Activated CD4-positive, alpha-beta T cell treated with anti-CD3 and anti-CD28 coated beads, Interleukin-2, amount 10 ng/mL, durations not matched to agents 24 days and 14 days (primary cell): ENCODE measurements at regions of chr16 and their contacts with region 1.

Region 1: GRCh38 chr16:84617791-84618580 is at the start of gene COTL1:
- DNase-seq: peak; percentile 98
- H3K4me3 Mint-ChIP-seq: peak within 1 kb of the TSS; percentile 96
- H3K27ac Mint-ChIP-seq: peak within 1 kb of the TSS; percentile 89
- H3K4me1 Mint-ChIP-seq: peaks cover 48% of the 10 kb centered on the region
- H3K27me3 Mint-ChIP-seq: peaks cover 7% of the 10 kb centered on the region
- total RNA-seq, gene COTL1: 470 and 474 TPM in 2 replicates

Region 2: DNA sequence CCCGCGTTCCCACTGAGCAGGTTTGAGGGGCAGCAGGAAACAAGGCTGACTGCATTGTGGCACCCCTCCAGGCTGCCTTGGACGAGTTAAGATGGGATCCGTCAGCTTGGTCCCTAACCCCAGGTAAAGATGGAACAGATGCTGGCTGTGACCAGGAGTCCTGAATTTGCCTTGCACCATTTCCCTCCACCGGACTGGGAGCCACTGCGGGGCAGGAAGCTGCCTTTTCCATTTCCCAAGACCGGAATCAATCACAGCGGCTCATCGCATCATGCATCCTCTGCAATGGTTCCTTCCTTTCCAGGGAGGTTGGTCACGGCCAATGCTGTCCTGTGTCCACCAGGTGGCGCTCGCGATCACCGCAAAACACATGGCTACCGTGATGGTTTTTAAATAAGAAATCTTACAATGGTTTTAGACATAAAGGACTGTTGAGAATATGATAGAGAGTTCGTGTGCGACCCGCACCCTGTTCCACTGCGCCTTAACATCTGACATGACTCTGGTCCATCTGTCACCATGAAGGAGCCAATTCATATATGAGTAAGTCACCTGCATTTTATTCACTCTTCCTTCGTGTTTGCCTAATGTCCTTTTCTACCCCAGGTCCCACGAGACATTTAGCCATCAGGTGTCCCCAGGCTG is 106.7 kb before region 1 on chr16:
- intact Hi-C with region 1: loop called (anchors 1 kb)
- DNase-seq: peak; percentile 95
- H3K4me3 Mint-ChIP-seq: peak overlapping the region; percentile 10
- H3K27ac Mint-ChIP-seq: peak overlapping the region; percentile 77
- H3K4me1 Mint-ChIP-seq: peaks cover 58% of the 10 kb centered on the region
- H3K27me3 Mint-ChIP-seq: no peaks in the 10 kb centered on the region

Region 3: GRCh38 chr16:84593825-84594724 is 23.9 kb before region 1 on chr16:
- intact Hi-C with region 1: loop called (anchors 1 kb)
- DNase-seq: peak; percentile 93
- H3K4me3 Mint-ChIP-seq: peak overlapping the region; percentile 84
- H3K27ac Mint-ChIP-seq: peak overlapping the region; percentile 95
- H3K4me1 Mint-ChIP-seq: peaks cover 62% of the 10 kb centered on the region
- H3K27me3 Mint-ChIP-seq: no peaks in the 10 kb centered on the region

Region 4: DNA sequence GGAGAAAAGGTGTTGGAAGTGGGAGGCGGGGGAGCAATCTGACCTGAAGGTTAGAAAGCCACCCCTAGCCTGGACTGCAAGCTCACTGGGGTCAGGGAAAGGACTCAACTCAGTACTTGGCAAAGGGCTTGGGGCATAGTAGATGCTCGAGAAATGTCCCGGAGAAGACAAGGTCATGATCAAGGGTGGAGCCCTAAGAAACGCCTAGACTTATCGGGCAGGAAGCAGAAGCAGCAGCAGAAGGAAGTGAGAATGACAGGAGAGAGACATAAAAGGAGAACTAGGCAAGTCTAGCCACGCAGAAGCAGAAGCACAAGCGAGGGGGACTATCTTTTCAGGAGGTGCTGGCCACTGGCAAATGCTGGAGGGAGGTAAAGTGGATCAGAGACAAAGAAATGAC is 10.3 kb before region 1 on chr16:
- intact Hi-C with region 1: loop called (anchors 1 kb)
- DNase-seq: peak; percentile 82
- H3K4me3 Mint-ChIP-seq: peak overlapping the region; percentile 80
- H3K27ac Mint-ChIP-seq: peak overlapping the region; percentile 87
- H3K4me1 Mint-ChIP-seq: peaks cover 86% of the 10 kb centered on the region
- H3K27me3 Mint-ChIP-seq: no peaks in the 10 kb centered on the region

Region 5: DNA sequence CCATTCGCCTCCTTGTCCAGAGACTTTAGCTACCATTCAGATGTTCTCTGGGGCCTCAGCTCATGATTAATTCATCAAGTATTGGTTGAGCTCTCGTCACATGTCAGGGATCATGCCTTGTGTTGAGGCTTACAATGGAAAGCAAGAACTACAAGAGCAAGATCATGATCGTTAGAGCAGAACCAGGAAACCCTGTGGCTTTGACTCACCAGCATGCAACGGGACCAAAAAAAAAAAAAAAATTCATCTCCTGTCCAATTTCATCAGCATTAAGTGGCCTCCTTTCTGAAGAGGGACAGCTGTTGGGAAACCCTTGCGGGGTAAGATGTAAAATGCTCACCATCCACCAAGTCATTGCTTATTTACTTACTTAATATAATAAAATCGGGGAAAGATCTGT is 69.7 kb after region 1 on chr16:
- intact Hi-C with region 1: no loop called
- DNase-seq: no peak
- H3K4me3 Mint-ChIP-seq: no peak overlapping the region
- H3K27ac Mint-ChIP-seq: no peak overlapping the region
- H3K4me1 Mint-ChIP-seq: peaks cover 12% of the 10 kb centered on the region
- H3K27me3 Mint-ChIP-seq: peaks cover 21% of the 10 kb centered on the region

Region 6: GRCh38 chr16:84952335-84953189 is 334.6 kb after region 1 on chr16:
- intact Hi-C with region 1: loop called (anchors 1 kb)
- DNase-seq: peak; percentile 92
- H3K4me3 Mint-ChIP-seq: no peak overlapping the region
- H3K27ac Mint-ChIP-seq: no peak overlapping the region
- H3K4me1 Mint-ChIP-seq: no peaks in the 10 kb centered on the region
- H3K27me3 Mint-ChIP-seq: peaks cover 3% of the 10 kb centered on the region